Gastrocnemius medialis (tissue), 4 donors: ENCODE measurements at regions of chr16 and their contacts with region 1.

Region 1: GRCh38 chr16:58684354-58685083 is at the start of gene SLC38A7:
- DNase-seq: peak; percentile 83 to 89
- ATAC-seq: peak; percentile 98
- H3K4me3 ChIP-seq: peak within 1 kb of the TSS; percentile 80 to 98 (median 92)
- H3K27ac ChIP-seq: peak within 1 kb of the TSS; percentile 76 to 93 (median 90)
- H3K4me1 ChIP-seq: peaks cover 15 to 20% of the 10 kb centered on the region in 2 donors
- H3K27me3 ChIP-seq: no peaks in the 10 kb centered on the region
- CTCF ChIP-seq: no peak
- POLR2A ChIP-seq: peak in 1 of 2 donors; percentile 25
- total RNA-seq, gene SLC38A7: 6.8 to 12.2 (median 9.1) TPM

Region 2: GRCh38 chr16:58176608-58177352 is 507.7 kb before region 1 on chr16:
- in situ Hi-C with region 1: no loop called
- intact Hi-C with region 1: no loop called
- DNase-seq: no peak
- ATAC-seq: no peak
- H3K4me3 ChIP-seq: no peak overlapping the region
- H3K27ac ChIP-seq: no peak overlapping the region
- H3K4me1 ChIP-seq: peaks cover 0 to 4% of the 10 kb centered on the region in 2 donors
- H3K27me3 ChIP-seq: no peaks in the 10 kb centered on the region
- CTCF ChIP-seq: no peak
- POLR2A ChIP-seq: no peak

Region 3: DNA sequence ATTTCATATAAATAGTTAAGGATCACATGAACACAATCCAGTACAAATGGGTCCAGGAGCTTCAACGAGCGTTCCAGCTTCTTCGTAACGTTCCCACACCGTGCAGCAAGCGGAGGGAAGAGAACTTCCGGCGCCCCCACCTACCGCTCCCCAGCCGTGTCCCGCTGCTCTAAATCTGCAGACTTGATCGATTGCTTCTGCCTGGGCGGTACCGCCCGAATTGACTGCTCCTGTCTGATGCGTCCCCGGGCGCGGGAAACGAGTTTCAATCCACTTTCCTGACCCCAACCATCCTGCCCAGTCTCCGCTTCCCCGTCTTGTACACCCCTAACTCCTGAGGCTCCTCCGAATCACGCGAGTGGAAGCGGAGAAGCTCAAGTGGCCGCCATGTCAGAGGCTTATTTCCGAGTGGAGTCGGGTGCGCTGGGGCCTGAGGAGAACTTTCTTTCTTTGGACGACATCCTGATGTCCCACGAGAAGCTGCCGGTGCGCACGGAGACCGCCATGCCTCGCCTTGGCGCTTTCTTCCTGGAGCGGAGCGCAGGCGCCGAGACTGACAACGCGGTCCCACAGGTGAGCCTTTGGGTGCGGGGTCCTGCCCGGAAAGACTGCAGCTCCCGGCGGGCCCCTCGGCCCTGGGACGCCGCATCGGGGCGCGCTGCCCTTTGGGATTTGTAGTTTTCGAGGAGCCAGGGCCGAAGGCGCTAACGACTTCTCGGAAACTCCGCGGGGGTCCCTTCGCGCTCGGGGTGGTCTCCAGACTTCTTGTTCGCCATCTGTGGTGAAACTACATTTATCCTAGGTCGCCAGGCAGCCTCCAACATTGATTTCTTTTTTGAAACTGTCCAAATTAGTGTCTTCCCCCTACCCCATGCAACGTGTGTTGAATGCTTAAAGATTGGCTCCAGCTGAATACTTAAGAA is 292.0 kb before region 1 on chr16 and contains the start of gene GINS3:
- in situ Hi-C with region 1: no loop called
- intact Hi-C with region 1: loop called (anchors 1 kb)
- DNase-seq: peak; percentile 77 to 84
- ATAC-seq: peak; percentile 95 to 96
- H3K4me3 ChIP-seq: peak within 1 kb of the TSS; percentile 86 to 98 (median 94)
- H3K27ac ChIP-seq: peak within 1 kb of the TSS; percentile 81 to 95 (median 86)
- H3K4me1 ChIP-seq: peaks cover 6 to 7% of the 10 kb centered on the region in 2 donors
- H3K27me3 ChIP-seq: no peaks in the 10 kb centered on the region
- CTCF ChIP-seq: peak in 1 of 5 experiments; percentile 9
- POLR2A ChIP-seq: no peak
- total RNA-seq, gene GINS3: 0.55 to 3.3 (median 1.0) TPM

Region 4: GRCh38 chr16:58629572-58630104 is 54.9 kb before region 1 on chr16 and contains the start of gene CNOT1:
- in situ Hi-C with region 1: no loop called
- intact Hi-C with region 1: loop called (anchors 2 kb)
- DNase-seq: peak; percentile 99 to 100
- ATAC-seq: peak; percentile 92 to 96
- H3K4me3 ChIP-seq: peak within 1 kb of the TSS; percentile 85 to 92 (median 88)
- H3K27ac ChIP-seq: peak within 1 kb of the TSS; percentile 94 to 99 (median 96)
- H3K4me1 ChIP-seq: peaks cover 21 to 35% of the 10 kb centered on the region in 2 donors
- H3K27me3 ChIP-seq: no peaks in the 10 kb centered on the region
- CTCF ChIP-seq: peak in 1 of 5 experiments; percentile 15
- POLR2A ChIP-seq: peak; percentile 87 to 89
- total RNA-seq, gene CNOT1: 54.7 to 119 (median 87.2) TPM

Region 5: DNA sequence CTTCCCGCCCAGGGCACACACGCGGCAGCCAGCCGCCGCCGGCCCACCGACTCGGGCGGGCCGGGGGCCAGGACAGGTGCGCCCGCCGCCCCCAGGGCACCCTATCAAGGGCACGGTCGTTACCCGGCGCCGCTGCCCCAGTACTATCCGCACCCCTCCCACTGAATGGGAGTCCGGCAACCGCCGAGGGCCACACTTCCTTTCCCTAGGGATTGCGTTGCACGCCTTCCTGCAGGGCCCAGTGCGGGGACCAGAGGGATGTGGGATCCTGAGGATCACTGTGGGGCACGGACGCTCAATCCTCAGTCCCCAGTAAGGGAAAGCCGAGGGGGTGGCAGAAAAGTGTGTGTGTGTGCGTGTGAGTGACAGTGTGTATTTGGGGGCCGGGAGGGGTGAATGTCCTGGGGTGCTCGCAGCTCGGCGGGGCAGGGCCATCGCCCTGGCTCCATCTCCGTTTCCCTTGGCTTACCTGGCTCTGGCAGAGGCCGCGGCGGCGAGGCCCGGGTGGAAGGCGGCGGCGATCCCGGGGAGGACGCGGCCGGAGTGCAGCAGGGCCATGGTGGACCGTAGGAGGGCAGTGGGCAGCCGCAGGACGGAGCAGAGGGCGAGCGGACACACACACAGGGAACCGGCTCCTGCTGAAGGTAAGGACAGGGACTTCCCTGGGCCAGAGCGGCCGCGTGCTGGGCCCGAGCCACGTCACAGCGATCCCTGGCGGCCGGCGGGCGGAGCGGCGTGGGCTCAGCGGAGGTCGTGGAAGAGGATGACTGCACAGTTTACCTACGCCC is 49.3 kb after region 1 on chr16 and contains the start of gene GOT2:
- in situ Hi-C with region 1: no loop called
- intact Hi-C with region 1: loop called (anchors 2 kb)
- DNase-seq: peak; percentile 68 to 82
- ATAC-seq: peak; percentile 87 to 88
- H3K4me3 ChIP-seq: peak within 1 kb of the TSS; percentile 79 to 96 (median 90)
- H3K27ac ChIP-seq: peak within 1 kb of the TSS; percentile 85 to 93 (median 92)
- H3K4me1 ChIP-seq: peaks cover 39 to 43% of the 10 kb centered on the region in 2 donors
- H3K27me3 ChIP-seq: no peaks in the 10 kb centered on the region
- CTCF ChIP-seq: peak; percentile 69 to 93 (median 84)
- POLR2A ChIP-seq: peak; percentile 40 to 56
- total RNA-seq, gene GOT2: 135 to 253 (median 195) TPM

Region 6: DNA sequence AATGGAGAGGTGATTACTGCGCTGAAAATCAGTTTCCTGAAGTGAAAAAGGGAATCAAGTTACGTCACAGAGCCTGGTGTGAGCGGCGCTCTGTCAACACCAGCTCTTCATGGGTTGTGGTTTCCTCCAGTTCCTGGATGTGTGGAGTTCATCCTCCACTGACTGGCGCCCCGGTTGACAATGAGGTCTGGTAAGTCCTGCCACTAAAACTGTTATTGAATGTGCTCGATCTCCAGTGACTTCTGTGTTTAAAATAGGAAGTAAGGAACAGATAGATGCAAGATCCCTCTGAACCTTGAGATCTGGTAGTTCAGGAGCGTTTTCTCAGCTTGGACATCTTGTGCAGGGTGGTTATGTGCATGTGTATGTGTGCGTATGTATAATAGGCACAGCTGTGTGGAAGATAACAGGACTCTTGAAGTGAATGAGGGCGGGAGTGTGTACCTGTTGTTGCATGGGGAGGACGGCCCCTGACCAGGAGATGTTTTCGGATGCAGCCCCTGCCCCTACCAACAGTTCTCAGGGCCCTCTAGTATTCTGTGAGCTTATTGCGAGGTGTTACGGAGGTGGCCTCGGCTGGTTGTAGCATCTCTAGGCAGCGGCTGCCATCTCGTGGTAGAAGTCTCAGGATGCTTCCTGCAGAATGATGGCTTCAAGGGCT is 71.6 kb after region 1 on chr16:
- in situ Hi-C with region 1: loop called in 1 of 4 experiments (anchors 10 kb)
- intact Hi-C with region 1: loop called (anchors 1 kb)
- DNase-seq: peak; percentile 48 to 62
- ATAC-seq: peak; percentile 89 to 94
- H3K4me3 ChIP-seq: no peak overlapping the region
- H3K27ac ChIP-seq: no peak overlapping the region
- H3K4me1 ChIP-seq: peaks cover 0 to 3% of the 10 kb centered on the region in 2 donors
- H3K27me3 ChIP-seq: no peaks in the 10 kb centered on the region
- CTCF ChIP-seq: peak; percentile 48 to 71 (median 64)
- POLR2A ChIP-seq: no peak